HepG2 (cell line): ENCODE measurements at regions of chr19 and their contacts with region 1.

Region 1: DNA sequence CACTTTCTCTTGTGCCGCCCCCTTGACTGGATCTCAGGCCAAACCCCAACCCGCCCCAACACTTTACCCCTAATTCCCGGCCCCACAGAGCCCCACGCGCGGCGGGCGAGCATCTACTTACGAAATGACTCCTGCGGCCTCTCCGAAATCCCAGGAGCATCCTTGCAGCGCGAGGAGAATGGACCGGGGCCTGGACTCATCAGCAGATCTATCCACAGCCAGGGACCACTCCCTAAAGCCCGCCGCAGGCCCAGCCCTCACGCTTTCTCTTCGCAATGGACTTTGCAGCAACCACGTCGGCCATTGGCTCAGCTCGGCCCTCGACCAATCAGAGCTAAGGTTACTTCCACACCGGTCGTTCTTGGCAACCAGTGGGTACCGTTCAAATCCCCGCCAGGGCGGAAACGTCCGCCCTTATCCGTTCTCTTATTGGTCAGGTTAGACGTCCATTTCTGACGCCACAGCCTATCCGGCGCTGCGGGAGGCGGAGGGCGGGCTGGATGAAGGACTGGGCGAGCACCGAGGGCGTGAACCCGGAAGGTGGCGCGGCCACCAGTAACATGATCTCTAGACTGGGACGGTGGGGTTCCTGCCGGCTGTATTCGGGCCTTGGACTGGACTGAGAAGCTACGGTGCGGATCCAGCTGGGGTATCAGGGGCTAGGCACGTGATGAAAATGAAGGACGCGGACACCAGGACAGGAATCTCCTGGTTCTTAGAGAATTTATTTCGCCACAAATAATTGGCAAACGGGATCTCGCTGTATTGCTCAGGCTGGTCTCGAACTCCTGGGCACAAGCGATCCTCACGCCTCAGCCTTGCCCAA is at the starts of genes CEP89 and FAAP24:
- DNase-seq: peak; percentile 98
- ATAC-seq: peak; percentile 97
- H3K4me3 ChIP-seq: peak within 1 kb of the TSS; percentile 81 to 93 (median 90)
- H3K27ac ChIP-seq: peak within 1 kb of the TSS; percentile 72
- H3K4me1 ChIP-seq: peaks cover 19% of the 10 kb centered on the region
- H3K27me3 ChIP-seq: no peaks in the 10 kb centered on the region; a peak in 1 of 5 replicates
- CTCF ChIP-seq: peak; percentile 41; the same call in 1 of the 2 replicates
- EP300 ChIP-seq: 0 out of 4 replicates have a peak, but pooled peaks of 1 of the 2 experiments have one; percentile 4
- POLR2A ChIP-seq: peak; percentile 59 to 76
- RAD21 ChIP-seq: no peak
- total RNA-seq, gene CEP89: 10.9 and 13.1 TPM in 2 replicates
- total RNA-seq, gene FAAP24: 6.0 and 10.0 TPM in 2 replicates

Region 2: DNA sequence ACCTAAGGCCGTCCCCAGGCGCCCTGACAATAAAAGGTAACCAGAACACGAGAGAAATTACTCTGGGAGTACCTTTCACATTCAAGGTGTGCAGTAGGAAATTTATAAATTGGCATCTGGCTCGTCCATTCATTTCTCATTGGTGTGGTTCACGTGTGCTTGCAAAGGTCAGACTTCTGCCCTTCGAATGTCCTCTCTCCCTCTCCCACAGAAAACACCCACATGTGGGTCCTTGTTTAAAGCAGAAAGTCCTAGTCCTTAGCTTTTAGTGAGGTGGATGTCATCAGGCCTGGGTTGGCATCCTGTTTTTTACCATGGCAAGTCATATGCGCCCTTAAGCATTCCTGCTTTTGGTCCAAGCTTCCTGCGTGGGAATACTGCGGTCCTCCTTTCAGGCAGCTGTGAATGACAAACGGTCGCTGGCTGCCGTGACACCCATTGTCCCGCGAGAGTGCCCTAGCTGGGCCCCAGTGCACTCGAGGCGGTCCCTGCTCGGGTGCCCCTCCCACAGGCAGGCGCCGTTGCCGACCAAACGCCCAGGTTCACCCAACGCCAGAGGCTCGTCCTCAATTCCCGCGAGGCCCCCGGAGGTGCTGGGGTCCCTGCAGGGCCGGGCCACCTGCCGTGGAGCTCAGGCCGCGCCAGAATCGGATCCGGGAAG is 280.5 kb before region 1 on chr19 and contains the start of gene NUDT19:
- CTCF ChIA-PET with region 1: no interaction called
- POLR2A ChIA-PET with region 1: no interaction called
- in situ Hi-C with region 1: loop called (anchors 10 kb)
- intact Hi-C with region 1: loop called (anchors 5 kb)
- DNase-seq: peak; percentile 78
- ATAC-seq: peak; percentile 94
- H3K4me3 ChIP-seq: peak within 1 kb of the TSS; percentile 54 to 75 (median 59)
- H3K27ac ChIP-seq: peak within 1 kb of the TSS; percentile 24
- H3K4me1 ChIP-seq: peaks cover 59% of the 10 kb centered on the region
- H3K27me3 ChIP-seq: no peaks in the 10 kb centered on the region
- CTCF ChIP-seq: no peak
- EP300 ChIP-seq: no peak
- POLR2A ChIP-seq: peak; percentile 73 to 74
- RAD21 ChIP-seq: no peak; the same call in 1 of the 2 replicates
- total RNA-seq, gene NUDT19: 3.6 and 3.9 TPM in 2 replicates

Region 3: DNA sequence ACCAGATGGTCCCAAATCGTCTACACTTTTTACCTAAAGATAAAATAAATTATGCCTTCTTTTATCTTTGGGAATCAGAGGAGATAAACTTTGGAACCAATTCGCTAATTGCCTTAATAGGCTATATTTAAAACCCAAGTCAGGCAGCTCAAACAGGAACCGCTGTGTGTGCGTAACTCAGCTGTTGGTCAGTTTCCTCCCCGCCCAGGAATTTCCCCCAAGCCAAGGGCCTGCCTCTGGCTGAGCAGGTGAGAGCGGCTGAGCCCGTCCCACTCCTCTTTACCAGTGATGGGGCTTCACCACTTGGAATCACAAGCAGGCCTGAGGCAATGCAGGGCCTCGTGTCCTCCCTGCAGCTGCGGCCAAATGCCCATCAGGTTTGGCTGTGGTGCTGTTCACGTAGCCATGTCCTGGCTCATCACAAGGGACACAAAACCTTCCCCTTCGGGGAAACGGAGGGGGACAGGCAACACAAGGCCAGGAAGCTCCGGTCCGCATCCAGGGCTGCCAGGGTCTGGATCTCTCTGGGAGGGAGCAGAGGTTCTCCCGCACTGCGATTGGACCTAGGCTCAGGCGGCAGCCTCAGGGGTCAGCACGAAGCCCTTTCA is 101.9 kb before region 1 on chr19:
- CTCF ChIA-PET with region 1: no interaction called
- POLR2A ChIA-PET with region 1: interaction called, 3 read pairs
- in situ Hi-C with region 1: no loop called
- intact Hi-C with region 1: loop called (anchors 1 kb)
- DNase-seq: peak; percentile 16
- ATAC-seq: peak; percentile 80
- H3K4me3 ChIP-seq: peak overlapping the region; percentile 50 to 74 (median 60)
- H3K27ac ChIP-seq: peak overlapping the region; percentile 72
- H3K4me1 ChIP-seq: peaks cover 26% of the 10 kb centered on the region
- H3K27me3 ChIP-seq: no peaks in the 10 kb centered on the region
- CTCF ChIP-seq: no peak
- EP300 ChIP-seq: no peak
- POLR2A ChIP-seq: no peak
- RAD21 ChIP-seq: no peak

Region 4: DNA sequence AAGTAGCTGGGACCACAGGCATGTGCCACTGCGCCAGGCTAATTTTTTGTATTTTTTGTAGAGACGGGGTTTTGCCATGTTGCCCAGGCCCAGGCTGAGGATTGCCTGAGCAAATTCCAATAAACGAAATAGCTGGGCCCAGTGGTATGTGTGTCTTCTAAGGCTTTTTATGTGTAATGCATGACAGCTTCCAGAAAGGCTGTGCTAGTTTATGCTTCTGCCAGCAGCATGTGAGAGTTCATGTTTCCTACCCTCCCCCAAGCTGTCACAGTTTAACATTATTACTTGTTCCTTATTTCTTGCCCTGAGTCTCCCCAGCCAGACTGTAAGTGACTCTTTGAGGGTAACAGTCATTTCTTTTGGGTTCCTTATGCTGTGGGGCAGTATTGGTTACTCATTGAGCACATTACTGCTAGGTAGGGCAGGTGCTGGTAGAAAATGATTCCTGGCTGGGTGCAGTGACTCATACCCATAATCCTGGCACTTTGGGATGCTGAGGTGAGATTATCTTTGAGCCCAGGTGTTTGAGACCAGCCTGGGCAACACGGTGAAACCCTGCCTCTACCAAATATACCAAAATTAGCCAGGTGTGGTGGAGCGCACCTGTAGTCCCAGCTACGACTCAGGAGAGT is 122.6 kb after region 1 on chr19:
- CTCF ChIA-PET with region 1: no interaction called
- POLR2A ChIA-PET with region 1: no interaction called
- in situ Hi-C with region 1: no loop called
- intact Hi-C with region 1: no loop called
- DNase-seq: no peak
- ATAC-seq: no peak
- H3K4me3 ChIP-seq: no peak overlapping the region
- H3K27ac ChIP-seq: no peak overlapping the region
- H3K4me1 ChIP-seq: peaks cover 17% of the 10 kb centered on the region
- H3K27me3 ChIP-seq: no peaks in the 10 kb centered on the region
- CTCF ChIP-seq: no peak
- EP300 ChIP-seq: no peak
- POLR2A ChIP-seq: no peak
- RAD21 ChIP-seq: no peak

Region 5: DNA sequence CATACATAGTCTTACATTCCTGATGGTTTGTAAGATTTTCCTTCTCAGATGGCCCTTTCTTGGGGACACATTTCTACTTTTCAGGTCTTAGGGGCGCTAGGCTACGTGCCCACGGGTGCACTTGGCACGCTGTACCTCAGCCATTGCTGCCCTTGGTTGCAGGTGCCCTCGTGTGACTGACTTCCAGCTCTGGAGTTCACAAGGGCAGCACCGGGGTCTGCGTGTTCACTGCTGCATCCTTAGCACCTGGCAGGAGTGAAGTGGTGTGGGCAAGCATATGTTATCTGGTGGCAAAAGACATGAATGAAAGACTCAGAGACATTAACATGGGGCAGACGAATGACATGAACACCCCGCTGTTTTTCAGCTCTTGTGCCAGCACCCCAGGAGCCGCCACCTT is 146.7 kb after region 1 on chr19:
- CTCF ChIA-PET with region 1: interaction called, 27 read pairs
- POLR2A ChIA-PET with region 1: no interaction called
- in situ Hi-C with region 1: loop called (anchors 5 kb)
- intact Hi-C with region 1: loop called (anchors 1 kb)
- DNase-seq: no peak
- ATAC-seq: no peak
- H3K4me3 ChIP-seq: no peak overlapping the region
- H3K27ac ChIP-seq: no peak overlapping the region
- H3K4me1 ChIP-seq: no peaks in the 10 kb centered on the region
- H3K27me3 ChIP-seq: no peaks in the 10 kb centered on the region
- CTCF ChIP-seq: no peak
- EP300 ChIP-seq: no peak
- POLR2A ChIP-seq: no peak
- RAD21 ChIP-seq: no peak